Dorsolateral prefrontal cortex (tissue), 120 donors: ENCODE measurements at regions of chr11 and their contacts with region 1.

Region 1: GRCh38 chr11:104015649-104016415 is 20.6 kb upstream of the DDI1 start:
- DNase-seq: no peak
- H3K4me3 ChIP-seq: no peak overlapping the region
- H3K27ac ChIP-seq: no peak overlapping the region
- H3K27me3 ChIP-seq: no peaks in the 10 kb centered on the region
- CTCF ChIP-seq: no peak

Region 2: DNA sequence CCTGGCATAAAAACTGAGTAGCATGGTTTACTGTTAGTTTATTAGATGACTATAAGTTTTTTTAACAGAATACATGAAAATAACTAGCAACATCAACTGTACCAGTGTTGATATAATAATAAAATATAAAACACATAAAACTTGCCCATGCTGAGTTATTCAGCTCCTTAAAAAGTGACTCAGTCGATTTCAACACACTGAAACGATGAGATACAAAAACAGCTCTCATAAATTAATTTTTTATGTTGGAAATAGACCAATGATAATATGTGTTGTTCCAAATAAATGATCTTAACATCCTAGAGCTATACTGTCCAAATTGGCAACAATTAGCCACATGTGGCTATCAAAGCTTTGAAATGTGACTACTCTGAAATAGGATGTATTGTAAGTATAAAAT is 132.2 kb after region 1 on chr11:
- intact Hi-C with region 1: no loop called
- DNase-seq: no peak
- H3K4me3 ChIP-seq: no peak overlapping the region
- H3K27ac ChIP-seq: no peak overlapping the region
- H3K27me3 ChIP-seq: no peaks in the 10 kb centered on the region
- CTCF ChIP-seq: no peak

Region 3: DNA sequence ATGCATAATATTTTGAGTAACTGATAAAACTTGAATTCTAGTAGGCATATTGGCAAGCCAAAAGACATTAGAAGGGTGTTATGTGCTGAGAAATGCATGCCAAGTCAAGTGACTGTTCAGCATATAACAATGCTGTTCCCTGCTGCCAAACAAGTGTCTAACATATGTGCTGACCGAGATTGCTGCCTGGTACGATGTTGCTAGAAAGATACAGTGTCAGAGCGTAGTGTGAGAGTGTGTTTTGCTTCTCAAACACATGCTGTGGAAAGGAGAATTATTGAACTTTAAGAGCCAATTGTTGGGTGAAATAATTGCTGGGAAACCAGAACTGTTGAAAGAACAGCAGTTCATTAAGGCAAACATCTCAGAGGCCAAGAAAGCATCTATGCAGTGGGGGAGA is 1522.8 kb after region 1 on chr11:
- intact Hi-C with region 1: loop called in 1 of 2 experiments (anchors 5 kb)
- DNase-seq: no peak
- H3K4me3 ChIP-seq: no peak overlapping the region
- H3K27ac ChIP-seq: no peak overlapping the region
- H3K27me3 ChIP-seq: no peaks in the 10 kb centered on the region
- CTCF ChIP-seq: no peak